Tibial artery (tissue), 4 donors: ENCODE measurements at regions of chr3 and their contacts with region 1.

Region 1: DNA sequence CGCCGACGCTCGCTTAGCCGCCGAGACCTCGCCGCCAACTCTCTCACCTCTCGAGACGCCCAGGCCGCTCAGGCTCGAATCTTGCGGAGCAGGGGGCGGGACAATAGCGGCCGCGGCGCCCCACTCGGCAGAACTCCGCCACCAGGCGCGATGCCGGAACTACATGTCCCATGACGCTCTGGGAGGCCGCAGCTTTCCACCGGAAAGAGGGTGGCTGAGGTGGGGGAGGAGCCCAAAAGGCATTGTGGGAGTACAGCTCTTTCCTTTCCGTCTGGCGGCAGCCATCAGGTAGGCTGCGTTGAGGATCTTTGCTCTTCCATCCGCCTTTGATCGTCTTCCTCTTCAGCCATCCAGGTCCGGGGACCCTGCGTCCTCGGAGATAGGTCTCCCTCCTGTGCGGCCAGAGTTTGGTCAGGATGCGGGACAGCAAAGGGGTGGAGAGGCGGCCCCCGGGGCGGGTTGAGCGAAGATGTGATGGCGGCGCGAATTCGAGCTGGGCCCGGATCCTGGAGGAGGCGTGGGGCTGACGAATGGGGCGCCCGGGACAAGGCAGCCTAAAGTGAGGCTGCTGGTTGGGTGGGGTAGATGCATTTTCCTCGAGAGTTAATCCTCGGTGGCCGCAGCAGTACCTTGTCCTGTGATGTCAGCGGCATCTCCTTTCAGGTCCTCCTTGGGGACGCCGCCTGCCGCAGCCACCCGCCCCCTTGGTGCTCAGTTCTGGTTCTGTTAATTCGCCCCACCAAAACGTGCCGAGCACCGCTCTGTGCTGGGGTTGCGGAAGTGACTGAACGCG is at the starts of genes NKIRAS1 and RPL15:
- DNase-seq: peak; percentile 97 to 98
- H3K4me3 ChIP-seq: peak within 1 kb of the TSS; percentile 72 to 75
- H3K27ac ChIP-seq: peak within 1 kb of the TSS; percentile 82 to 89
- H3K4me1 ChIP-seq: peaks cover 0 to 45% (median 19%) of the 10 kb centered on the region in 4 donors
- H3K27me3 ChIP-seq: no peaks in the 10 kb centered on the region
- CTCF ChIP-seq: peak; percentile 62 to 93

Region 2: GRCh38 chr3:23945903-23946751 is 29.0 kb after region 1 on chr3:
- intact Hi-C with region 1: loop called (anchors 2 kb)
- DNase-seq: peak; percentile 96 to 99
- H3K4me3 ChIP-seq: peak overlapping the region; percentile 80 to 92
- H3K27ac ChIP-seq: peak overlapping the region; percentile 83 to 99
- H3K4me1 ChIP-seq: peaks cover 0 to 53% (median 37%) of the 10 kb centered on the region in 4 donors
- H3K27me3 ChIP-seq: no peaks in the 10 kb centered on the region
- CTCF ChIP-seq: no peak